A549 (cell line): ENCODE measurements at regions of chr9 and their contacts with region 1.

Region 1: GRCh38 chr9:124708633-124709291 is 62.3 kb downstream of the NR6A1 start:
- DNase-seq: peak in 1 of 2 experiments; percentile 41
- ATAC-seq: peak in 1 of 2 experiments; percentile 66; a peak in 3 of 6 replicates
- H3K4me3 ChIP-seq: no peak overlapping the region
- H3K27ac ChIP-seq: peak overlapping the region in 1 of 2 experiments; percentile 47; a peak in 2 of 6 replicates
- H3K4me1 ChIP-seq: peaks cover 21% of the 10 kb centered on the region
- CTCF ChIP-seq: no peak
- EP300 ChIP-seq: no peak
- POLR2A ChIP-seq: no peak
- RAD21 ChIP-seq: no peak

Region 2: GRCh38 chr9:124544535-124544934 is 164.2 kb before region 1 on chr9:
- CTCF ChIA-PET with region 1: interaction called, 21 read pairs
- POLR2A ChIA-PET with region 1: no interaction called
- DNase-seq: no peak
- ATAC-seq: no peak
- H3K4me3 ChIP-seq: no peak overlapping the region
- H3K27ac ChIP-seq: no peak overlapping the region
- H3K4me1 ChIP-seq: no peaks in the 10 kb centered on the region
- CTCF ChIP-seq: no peak
- EP300 ChIP-seq: no peak
- POLR2A ChIP-seq: no peak
- RAD21 ChIP-seq: no peak

Region 3: GRCh38 chr9:124658165-124659017 is 50.4 kb before region 1 on chr9:
- CTCF ChIA-PET with region 1: interaction called, 73 read pairs
- POLR2A ChIA-PET with region 1: interaction called, 19 read pairs
- DNase-seq: peak; percentile 95 to 97
- ATAC-seq: peak; percentile 95 to 96
- H3K4me3 ChIP-seq: peak overlapping the region; percentile 68
- H3K27ac ChIP-seq: peak overlapping the region; percentile 86 to 88
- H3K4me1 ChIP-seq: peaks cover 35% of the 10 kb centered on the region
- CTCF ChIP-seq: no peak
- EP300 ChIP-seq: no peak
- POLR2A ChIP-seq: peak; percentile 77
- RAD21 ChIP-seq: no peak

Region 4: GRCh38 chr9:124721109-124721906 is 12.5 kb after region 1 on chr9:
- CTCF ChIA-PET with region 1: interaction called, 59 read pairs
- POLR2A ChIA-PET with region 1: no interaction called
- DNase-seq: peak in 1 of 2 experiments; percentile 40
- ATAC-seq: peak; percentile 34 to 83; a peak in 3 of 6 replicates
- H3K4me3 ChIP-seq: no peak overlapping the region
- H3K27ac ChIP-seq: peak overlapping the region; percentile 15 to 68; a peak in 4 of 6 replicates
- H3K4me1 ChIP-seq: peaks cover 18% of the 10 kb centered on the region
- CTCF ChIP-seq: no peak
- EP300 ChIP-seq: no peak
- POLR2A ChIP-seq: no peak
- RAD21 ChIP-seq: no peak

Region 5: GRCh38 chr9:124764774-124765438 is 56.1 kb after region 1 on chr9:
- CTCF ChIA-PET with region 1: interaction called, 166 read pairs
- POLR2A ChIA-PET with region 1: no interaction called
- DNase-seq: peak; percentile 50 to 53
- ATAC-seq: peak; percentile 54 to 76; a peak in 4 of 6 replicates
- H3K4me3 ChIP-seq: no peak overlapping the region
- H3K27ac ChIP-seq: no peak overlapping the region
- H3K4me1 ChIP-seq: peaks cover 22% of the 10 kb centered on the region; the same call in 2 of the 3 replicates
- CTCF ChIP-seq: peak; percentile 50
- EP300 ChIP-seq: no peak
- POLR2A ChIP-seq: no peak
- RAD21 ChIP-seq: peak; percentile 53 to 61